Heart left ventricle (tissue), 16 donors: ENCODE measurements at regions of chr1 and their contacts with region 1.

Region 1: GRCh38 chr1:24502709-24503058 is at the start of gene RCAN3:
- DNase-seq: peak; percentile 87 to 93 (median 90)
- ATAC-seq: peak; percentile 88 to 99 (median 96)
- H3K4me3 ChIP-seq: peak within 1 kb of the TSS; percentile 66 to 95 (median 84)
- H3K27ac ChIP-seq: peak within 1 kb of the TSS; percentile 76 to 93 (median 87)
- H3K4me1 ChIP-seq: peaks cover 0 to 35% (median 9%) of the 10 kb centered on the region in 12 donors
- H3K27me3 ChIP-seq: no peaks in the 10 kb centered on the region
- CTCF ChIP-seq: no peak
- POLR2A ChIP-seq: no peak
- total RNA-seq, gene RCAN3: 4.3 to 9.7 (median 6.1) TPM

Region 2: GRCh38 chr1:24289937-24290595 is 212.6 kb before region 1 on chr1:
- intact Hi-C with region 1: no loop called
- DNase-seq: peak; percentile 83 to 93 (median 90)
- ATAC-seq: peak; percentile 95 to 99 (median 98)
- H3K4me3 ChIP-seq: no peak overlapping the region
- H3K27ac ChIP-seq: peak overlapping the region in 3 of 12 donors; percentile 16 to 55 (median 24)
- H3K4me1 ChIP-seq: peaks cover 0 to 28% (median 4%) of the 10 kb centered on the region in 12 donors
- H3K27me3 ChIP-seq: peaks cover 0 to 6% (median 0%) of the 10 kb centered on the region in 9 donors
- CTCF ChIP-seq: no peak
- POLR2A ChIP-seq: no peak

Region 3: DNA sequence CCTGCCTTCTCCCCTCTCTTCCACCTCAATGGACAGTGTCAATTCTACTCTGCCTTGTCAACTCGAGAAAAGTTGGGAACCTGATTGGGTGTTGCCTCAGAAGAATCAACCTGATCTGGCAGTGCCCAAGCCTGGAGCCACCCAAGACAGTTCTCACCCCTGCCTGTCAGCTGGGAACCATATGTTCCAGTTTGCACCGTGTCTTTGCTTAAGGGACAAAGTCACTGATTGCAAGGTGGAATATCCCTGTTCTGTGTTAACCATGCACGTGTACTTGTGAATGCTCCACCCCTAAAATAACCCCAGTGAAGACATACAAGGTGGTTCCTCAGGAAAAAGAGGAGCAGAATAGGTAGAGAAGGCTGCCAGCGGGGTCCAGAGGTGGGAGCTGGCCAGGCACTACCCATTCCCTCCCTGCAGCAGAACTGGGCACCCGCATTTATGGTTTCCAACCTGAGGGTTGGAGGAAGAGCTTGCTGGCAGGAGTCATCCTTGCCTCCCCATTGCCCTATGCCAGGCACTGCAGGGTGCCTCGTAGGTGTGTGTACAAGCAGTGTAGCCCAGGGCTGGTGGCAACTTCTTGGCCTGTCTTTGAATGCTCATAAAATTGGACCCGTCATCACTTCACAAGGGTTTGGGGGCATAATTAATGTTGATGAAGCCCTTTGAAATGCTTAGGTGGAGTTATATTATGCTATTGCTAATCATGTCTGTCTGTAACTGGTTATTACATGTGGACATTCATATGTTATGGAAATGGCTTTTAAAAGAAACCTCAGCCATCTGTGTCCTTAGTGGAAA is 75.7 kb before region 1 on chr1:
- intact Hi-C with region 1: loop called in 1 of 10 experiments (anchors 5 kb)
- DNase-seq: no peak
- ATAC-seq: peak; percentile 23 to 40 (median 25)
- H3K4me3 ChIP-seq: no peak overlapping the region
- H3K27ac ChIP-seq: peak overlapping the region in 1 of 12 donors; percentile 25
- H3K4me1 ChIP-seq: peaks cover 0 to 28% (median 13%) of the 10 kb centered on the region in 12 donors
- H3K27me3 ChIP-seq: no peaks in the 10 kb centered on the region
- CTCF ChIP-seq: no peak
- POLR2A ChIP-seq: no peak

Region 4: DNA sequence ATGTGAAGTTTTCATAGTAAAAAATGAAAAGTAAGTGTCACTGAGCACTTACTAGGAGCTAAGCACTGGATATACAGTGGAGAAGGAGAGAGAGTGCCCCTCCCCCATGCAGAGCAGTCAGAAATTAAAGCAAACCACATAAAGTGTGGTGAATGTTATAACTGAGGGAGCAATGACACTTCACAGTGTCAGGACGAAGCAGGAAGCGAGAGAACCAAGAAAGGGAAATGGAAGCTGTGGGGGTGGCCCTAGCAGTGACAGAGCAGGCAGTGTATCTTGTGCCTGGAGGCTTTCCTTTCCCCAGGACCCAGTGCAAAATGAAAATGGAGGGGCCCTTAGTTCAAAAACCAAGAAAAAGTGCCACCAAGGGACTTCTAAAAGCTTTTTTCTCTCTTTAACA is 21.6 kb before region 1 on chr1:
- intact Hi-C with region 1: no loop called
- DNase-seq: peak in 1 of 5 donors; percentile 14
- ATAC-seq: peak in 2 of 4 donors; percentile 63 to 68
- H3K4me3 ChIP-seq: no peak overlapping the region
- H3K27ac ChIP-seq: peak overlapping the region in 1 of 12 donors; percentile 83
- H3K4me1 ChIP-seq: peaks cover 0 to 19% (median 0%) of the 10 kb centered on the region in 12 donors
- H3K27me3 ChIP-seq: no peaks in the 10 kb centered on the region
- CTCF ChIP-seq: no peak
- POLR2A ChIP-seq: no peak